ENCODE measurements at regions of chr10 and their contacts with region 1.

Region 1: DNA sequence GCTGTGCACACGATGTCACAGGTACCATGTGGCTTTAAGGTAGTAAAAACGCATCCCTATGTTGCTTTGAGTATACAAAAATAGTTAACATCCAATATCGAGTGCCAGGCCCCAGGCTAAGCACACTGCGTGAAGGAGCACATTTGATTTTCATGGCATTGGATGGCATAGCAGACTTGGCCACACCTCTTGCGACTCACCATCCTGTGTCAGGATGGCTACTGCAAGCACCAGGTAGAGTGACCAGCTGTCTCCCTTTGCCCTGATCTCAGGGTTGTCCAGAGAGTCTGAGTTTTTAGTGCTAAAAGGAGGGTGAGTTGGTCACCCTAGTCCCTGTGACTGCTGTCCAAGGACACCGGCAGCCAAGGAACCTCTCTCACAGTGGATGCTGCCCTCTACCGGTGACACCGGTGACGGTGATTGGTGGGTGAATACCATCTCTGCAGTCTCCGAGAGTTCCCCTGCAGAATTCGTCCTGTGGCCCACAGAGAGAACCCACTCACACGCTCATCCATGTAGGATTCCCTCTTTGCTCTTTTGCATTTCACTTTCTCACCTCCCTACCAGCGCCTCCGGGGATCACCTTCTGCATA is 76.1 kb downstream of the BICC1 start:
- DNase-seq: no peak
- H3K4me3 Mint-ChIP-seq: no peak overlapping the region
- H3K27ac Mint-ChIP-seq: no peak overlapping the region
- H3K4me1 Mint-ChIP-seq: no peaks in the 10 kb centered on the region
- H3K27me3 Mint-ChIP-seq: peaks cover 4% of the 10 kb centered on the region

Region 2: DNA sequence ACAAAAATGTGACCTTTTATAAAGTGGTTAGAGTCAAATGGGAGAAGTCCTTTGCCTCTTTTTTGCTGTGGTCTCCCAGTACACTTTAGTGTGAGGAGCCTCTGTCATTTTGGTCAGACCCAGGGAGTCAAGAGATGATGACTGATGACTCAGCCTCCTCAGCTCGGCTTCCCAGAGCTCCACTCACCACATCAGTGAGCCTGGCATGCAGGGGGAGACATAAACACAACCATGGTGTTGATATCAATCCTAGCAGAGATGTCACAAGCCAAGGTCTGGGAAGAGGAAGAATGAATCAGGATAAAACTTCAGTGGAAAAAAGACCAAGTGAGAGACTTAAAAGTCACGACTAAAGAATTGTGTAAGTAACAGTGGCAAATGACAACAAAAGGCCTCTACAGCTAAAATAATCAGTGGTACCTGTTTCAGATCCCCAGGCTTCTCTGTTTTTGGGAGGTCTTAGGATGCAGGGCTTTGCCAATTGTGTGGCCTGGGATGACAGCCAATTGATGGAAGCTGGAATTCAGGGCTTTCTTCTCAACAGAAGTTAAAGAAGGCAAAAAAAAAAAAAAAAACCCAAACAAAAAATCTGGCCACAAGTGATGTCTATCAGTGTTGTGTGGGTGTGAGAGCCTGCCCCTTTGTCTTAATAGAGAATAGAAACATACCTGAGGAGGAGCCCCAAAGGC is 153.3 kb before region 1 on chr10:
- CTCF ChIA-PET with region 1: no interaction called
- POLR2A ChIA-PET with region 1: no interaction called
- intact Hi-C with region 1: no loop called
- DNase-seq: peak; percentile 45
- H3K4me3 Mint-ChIP-seq: no peak overlapping the region
- H3K27ac Mint-ChIP-seq: no peak overlapping the region
- H3K4me1 Mint-ChIP-seq: peaks cover 14% of the 10 kb centered on the region
- H3K27me3 Mint-ChIP-seq: peaks cover 7% of the 10 kb centered on the region

Region 3: DNA sequence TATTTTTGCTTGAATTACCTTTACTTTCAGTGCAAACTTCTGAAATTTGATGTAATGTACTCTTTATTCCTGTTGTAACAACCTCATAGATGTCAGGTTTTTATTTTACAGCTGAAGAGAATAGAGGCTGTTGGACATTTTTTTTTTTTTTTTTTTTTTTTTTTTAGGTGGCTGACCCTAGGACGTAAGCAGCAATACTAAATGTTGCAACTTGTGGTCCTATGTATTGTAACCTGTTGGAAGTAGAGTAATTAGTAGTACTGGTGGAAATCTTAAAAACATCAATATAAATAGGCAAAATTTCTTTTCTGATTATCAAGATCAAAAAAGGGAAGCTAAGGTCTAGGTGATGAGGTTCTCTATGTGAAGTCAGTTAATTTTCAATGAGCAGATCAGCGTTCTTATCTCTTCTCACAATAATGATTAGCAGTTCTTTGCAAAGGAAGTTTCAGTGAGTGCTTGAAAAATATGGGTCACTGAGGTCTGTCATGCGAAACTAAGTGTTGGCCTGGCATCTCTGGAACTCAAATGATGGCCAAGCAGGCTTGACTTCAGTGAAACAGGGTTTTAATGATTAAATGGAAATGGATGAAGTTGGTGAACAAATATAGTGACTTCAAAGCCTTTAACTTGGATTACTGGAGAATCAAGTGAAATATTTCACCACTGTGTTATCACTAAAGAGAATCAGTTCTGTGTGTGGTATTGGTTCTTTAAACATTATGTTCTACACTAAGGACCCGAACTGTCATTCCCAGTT is 33.4 kb before region 1 on chr10:
- CTCF ChIA-PET with region 1: no interaction called
- POLR2A ChIA-PET with region 1: no interaction called
- intact Hi-C with region 1: no loop called
- DNase-seq: no peak
- H3K4me3 Mint-ChIP-seq: no peak overlapping the region
- H3K27ac Mint-ChIP-seq: no peak overlapping the region
- H3K4me1 Mint-ChIP-seq: no peaks in the 10 kb centered on the region
- H3K27me3 Mint-ChIP-seq: peaks cover 5% of the 10 kb centered on the region

Region 4: DNA sequence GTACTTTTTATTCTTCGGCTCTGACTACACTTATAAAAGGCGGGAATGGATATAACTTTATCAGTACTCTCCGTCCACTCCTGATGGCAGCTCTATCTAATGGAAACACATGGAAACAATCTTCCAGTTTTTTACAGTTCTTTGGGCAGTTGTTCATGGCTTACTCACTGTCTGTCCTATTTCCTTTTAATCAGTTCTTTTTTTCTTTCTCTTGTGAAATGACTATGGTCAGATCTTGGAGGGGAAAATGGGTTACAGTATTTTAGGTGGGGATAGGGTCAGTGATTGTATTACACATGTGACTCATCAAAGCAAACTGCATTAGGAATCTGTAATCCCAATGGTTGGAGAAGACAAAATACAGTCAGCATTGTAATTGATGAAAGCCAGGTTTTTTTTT is 36.3 kb after region 1 on chr10:
- CTCF ChIA-PET with region 1: no interaction called
- POLR2A ChIA-PET with region 1: no interaction called
- intact Hi-C with region 1: loop called (anchors 1 kb)
- DNase-seq: no peak
- H3K4me3 Mint-ChIP-seq: no peak overlapping the region
- H3K27ac Mint-ChIP-seq: no peak overlapping the region
- H3K4me1 Mint-ChIP-seq: no peaks in the 10 kb centered on the region
- H3K27me3 Mint-ChIP-seq: no peaks in the 10 kb centered on the region

Region 5: DNA sequence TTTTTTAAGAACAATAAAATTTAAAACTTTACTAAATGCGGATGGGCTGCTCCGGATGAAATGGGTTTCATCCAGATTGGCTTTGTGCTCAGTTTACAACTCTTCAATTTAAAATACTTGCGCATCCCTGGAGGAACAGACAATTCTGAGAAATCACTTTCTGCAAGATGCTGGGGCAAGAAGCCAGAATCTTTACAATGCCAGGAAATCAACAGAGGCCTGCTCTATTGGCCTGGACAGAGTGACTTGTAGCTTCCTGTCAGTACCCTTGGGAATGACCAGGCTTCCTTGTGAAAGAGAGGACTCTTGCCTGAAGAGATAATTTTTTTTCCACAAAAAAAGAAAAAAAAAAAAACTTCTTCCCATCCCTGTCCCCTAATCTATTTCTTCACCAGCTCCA is 777.5 kb after region 1 on chr10:
- CTCF ChIA-PET with region 1: no interaction called
- POLR2A ChIA-PET with region 1: no interaction called
- intact Hi-C with region 1: no loop called
- DNase-seq: no peak
- H3K4me3 Mint-ChIP-seq: no peak overlapping the region
- H3K27ac Mint-ChIP-seq: no peak overlapping the region
- H3K4me1 Mint-ChIP-seq: peaks cover 12% of the 10 kb centered on the region
- H3K27me3 Mint-ChIP-seq: peaks cover 11% of the 10 kb centered on the region